Mammary epithelial cell (primary cell): ENCODE measurements at regions of chr6 and their contacts with region 1.

Region 1: DNA sequence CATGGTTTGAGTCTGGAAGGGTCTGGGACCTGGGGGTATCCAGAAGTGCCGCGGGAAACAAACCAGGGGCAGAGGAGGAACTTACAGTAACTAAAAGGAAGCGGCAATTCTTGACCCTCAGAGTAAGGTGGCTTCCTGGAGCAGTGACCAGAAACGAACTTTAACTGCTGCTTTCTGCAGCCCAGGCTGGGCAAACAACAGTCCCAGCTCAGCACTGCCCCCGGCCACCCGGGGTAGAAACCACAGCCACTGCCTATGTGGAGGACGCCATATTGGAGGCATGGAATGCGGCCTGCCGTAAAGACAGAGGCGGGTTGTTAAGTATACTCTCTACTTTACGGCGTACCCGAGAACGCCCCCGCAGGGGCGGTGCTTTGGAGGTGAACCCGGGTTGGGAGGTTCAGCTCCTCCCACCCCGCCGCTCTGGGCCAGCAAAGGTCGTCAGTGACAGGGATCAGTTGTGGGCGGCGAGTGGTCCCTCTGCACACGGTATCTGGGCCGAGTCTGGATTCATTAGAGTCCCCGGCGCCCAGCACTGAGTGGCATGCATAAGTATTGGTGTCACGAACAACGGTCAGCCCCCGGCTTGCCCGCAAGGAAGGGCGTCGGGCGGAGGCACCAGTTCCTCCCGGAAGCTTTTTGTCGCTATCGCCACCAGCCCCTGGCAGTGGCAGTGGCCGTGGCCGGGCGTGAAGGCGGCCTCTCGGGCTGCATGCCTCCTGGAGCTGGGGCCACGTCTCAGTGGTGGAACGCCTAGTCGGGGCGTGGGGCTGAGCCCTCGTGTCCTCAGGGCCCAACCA is at the start of gene PDSS2:
- DNase-seq: peak; percentile 94
- H3K4me3 ChIP-seq: peak within 1 kb of the TSS; percentile 68 to 78 (median 74)
- H3K27ac ChIP-seq: peak within 1 kb of the TSS; percentile 73
- H3K4me1 ChIP-seq: peaks cover 10% of the 10 kb centered on the region
- H3K27me3 ChIP-seq: no peaks in the 10 kb centered on the region
- CTCF ChIP-seq: peak; percentile 28 to 61
- total RNA-seq, gene PDSS2: 7.5 to 10.6 TPM

Region 2: DNA sequence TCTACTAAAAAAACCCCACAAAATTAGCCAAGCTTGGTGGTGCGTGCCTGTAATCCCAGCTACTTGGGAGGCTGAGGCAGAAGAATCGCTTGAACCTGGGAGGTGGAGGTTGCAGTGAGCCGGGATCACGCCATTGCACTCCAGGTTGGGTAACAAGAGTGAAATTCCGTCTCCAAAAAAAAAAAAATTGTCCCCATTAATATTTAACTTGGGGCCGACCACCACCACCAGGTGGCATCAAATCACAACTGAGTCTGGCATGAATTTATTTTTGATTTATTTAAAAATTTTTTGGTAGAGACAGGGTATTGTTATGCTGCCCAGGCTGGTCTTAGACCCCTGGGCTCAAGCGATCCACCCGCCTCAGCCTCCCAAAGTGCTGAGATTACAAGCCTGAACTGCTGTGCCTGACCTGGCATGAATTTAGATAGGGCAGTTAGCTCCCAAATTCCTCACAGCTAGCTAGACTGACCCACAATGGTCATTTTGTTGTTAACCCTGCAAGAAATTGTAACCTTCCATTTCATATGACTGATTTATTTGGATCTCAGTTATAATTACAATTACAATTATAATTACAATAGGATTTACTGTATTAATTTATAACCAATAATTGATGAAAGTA is 327.0 kb before region 1 on chr6:
- CTCF ChIA-PET with region 1: interaction called, 4 read pairs
- dilution Hi-C with region 1: no loop called
- in situ Hi-C with region 1: no loop called
- intact Hi-C with region 1: loop called (anchors 5 kb)
- DNase-seq: no peak
- H3K4me3 ChIP-seq: no peak overlapping the region
- H3K27ac ChIP-seq: no peak overlapping the region
- H3K4me1 ChIP-seq: no peaks in the 10 kb centered on the region
- H3K27me3 ChIP-seq: no peaks in the 10 kb centered on the region
- CTCF ChIP-seq: peak in 1 of 2 donors; percentile 53

Region 3: GRCh38 chr6:107185391-107185970 is 274.0 kb before region 1 on chr6:
- CTCF ChIA-PET with region 1: interaction called, 3 read pairs
- dilution Hi-C with region 1: no loop called
- in situ Hi-C with region 1: no loop called
- intact Hi-C with region 1: loop called (anchors 10 kb)
- DNase-seq: peak; percentile 34
- H3K4me3 ChIP-seq: no peak overlapping the region
- H3K27ac ChIP-seq: no peak overlapping the region
- H3K4me1 ChIP-seq: no peaks in the 10 kb centered on the region
- H3K27me3 ChIP-seq: no peaks in the 10 kb centered on the region
- CTCF ChIP-seq: peak; percentile 15 to 54

Region 4: DNA sequence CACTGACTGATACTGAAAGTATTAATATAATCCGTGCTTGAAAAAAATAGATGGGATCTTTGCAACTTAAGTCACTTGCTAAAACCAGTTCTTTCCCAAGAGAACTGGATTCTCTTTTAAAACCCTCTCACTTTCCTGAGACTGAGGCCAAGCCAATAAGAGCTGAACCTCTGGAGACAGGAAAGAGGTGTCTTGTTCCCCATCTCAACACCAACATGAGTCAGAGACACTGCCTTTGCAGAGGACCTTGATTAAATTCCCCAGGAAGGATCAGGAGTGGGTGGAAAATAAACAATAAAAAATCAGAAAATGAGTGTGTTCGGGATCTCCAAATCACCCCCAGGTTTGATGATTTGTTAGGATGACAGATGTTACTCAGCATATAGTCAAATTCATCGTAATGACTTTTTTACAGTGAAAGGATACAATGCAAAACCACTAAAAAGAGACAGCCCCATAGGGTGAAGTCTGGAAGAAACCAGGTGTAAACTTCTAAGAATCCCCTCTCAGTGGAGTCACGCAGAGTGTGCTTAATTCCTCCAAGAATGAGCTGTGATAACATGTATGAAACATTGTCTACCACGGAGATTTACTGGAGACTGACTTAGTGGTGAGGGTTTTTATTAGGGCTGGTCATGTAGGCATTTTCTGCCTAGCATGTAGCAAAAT is 221.4 kb before region 1 on chr6:
- CTCF ChIA-PET with region 1: no interaction called
- dilution Hi-C with region 1: no loop called
- in situ Hi-C with region 1: no loop called
- intact Hi-C with region 1: loop called (anchors 1 kb)
- DNase-seq: peak; percentile 83
- H3K4me3 ChIP-seq: no peak overlapping the region
- H3K27ac ChIP-seq: peak overlapping the region; percentile 38
- H3K4me1 ChIP-seq: peaks cover 38% of the 10 kb centered on the region
- H3K27me3 ChIP-seq: no peaks in the 10 kb centered on the region
- CTCF ChIP-seq: no peak

Region 5: DNA sequence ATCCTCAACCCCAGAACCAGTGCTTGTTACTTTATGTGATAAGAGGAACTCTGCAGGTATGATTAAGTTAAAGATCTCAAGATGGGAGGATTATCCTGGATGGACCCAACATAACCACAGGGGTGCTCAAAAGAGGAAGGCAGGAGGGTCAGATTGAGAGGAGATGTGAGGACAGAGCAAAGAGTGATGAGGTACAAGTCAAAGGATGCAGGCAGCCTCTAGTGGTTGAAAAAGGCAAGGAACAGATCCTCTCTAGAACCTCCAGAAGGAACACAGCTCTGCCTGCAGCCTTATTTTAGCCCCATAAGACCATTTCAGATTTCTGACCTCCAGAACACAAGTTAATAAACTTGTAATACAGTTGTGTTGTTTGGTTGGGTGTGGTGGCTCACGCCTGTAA is 41.4 kb before region 1 on chr6:
- CTCF ChIA-PET with region 1: no interaction called
- dilution Hi-C with region 1: loop called (anchors 5 kb)
- in situ Hi-C with region 1: no loop called
- intact Hi-C with region 1: no loop called
- DNase-seq: peak; percentile 9
- H3K4me3 ChIP-seq: no peak overlapping the region
- H3K27ac ChIP-seq: no peak overlapping the region
- H3K4me1 ChIP-seq: no peaks in the 10 kb centered on the region
- H3K27me3 ChIP-seq: no peaks in the 10 kb centered on the region
- CTCF ChIP-seq: peak; percentile 45 to 53

Region 6: DNA sequence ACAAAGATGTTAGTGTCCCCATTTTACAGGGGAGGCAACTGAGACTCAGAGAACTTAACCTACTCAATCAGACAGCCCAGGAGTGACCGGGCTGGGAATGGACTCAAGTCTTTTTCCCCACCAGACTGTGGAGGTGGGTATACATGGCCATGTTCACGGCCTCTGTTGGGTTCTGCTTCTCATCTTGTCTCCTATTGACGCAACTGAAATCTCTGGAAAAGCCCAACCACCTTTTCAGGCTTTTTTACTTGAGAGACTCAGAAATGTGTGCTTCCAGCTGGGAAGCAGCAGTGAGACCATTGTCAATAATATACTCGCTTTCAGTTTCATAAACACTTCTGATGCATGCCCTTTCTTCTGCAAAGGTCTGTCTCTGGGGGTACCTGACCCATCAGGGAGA is 101.2 kb after region 1 on chr6:
- CTCF ChIA-PET with region 1: no interaction called
- dilution Hi-C with region 1: no loop called
- in situ Hi-C with region 1: no loop called
- intact Hi-C with region 1: no loop called
- DNase-seq: no peak
- H3K4me3 ChIP-seq: no peak overlapping the region
- H3K27ac ChIP-seq: no peak overlapping the region
- H3K4me1 ChIP-seq: no peaks in the 10 kb centered on the region
- H3K27me3 ChIP-seq: peaks cover 2% of the 10 kb centered on the region
- CTCF ChIP-seq: no peak